Activated B cell treated with CpG ODN at 0.5 μM for 24 hours (primary cell): ENCODE measurements at regions of chr1 and their contacts with region 1.

Region 1: GRCh38 chr1:23019094-23019862 is at the start of gene KDM1A:
- DNase-seq: peak; percentile 96
- ATAC-seq: peak; percentile 98
- H3K4me3 Mint-ChIP-seq: peak within 1 kb of the TSS; percentile 93
- H3K27ac Mint-ChIP-seq: peak within 1 kb of the TSS; percentile 84
- H3K4me1 Mint-ChIP-seq: peaks cover 38% of the 10 kb centered on the region
- H3K27me3 Mint-ChIP-seq: no peaks in the 10 kb centered on the region
- CTCF ChIP-seq: no peak
- total RNA-seq, gene KDM1A: 40.7 and 41.5 TPM in 2 replicates

Region 2: GRCh38 chr1:22431965-22432364 is 587.3 kb before region 1 on chr1:
- CTCF ChIA-PET with region 1: no interaction called
- POLR2A ChIA-PET with region 1: no interaction called
- intact Hi-C with region 1: no loop called
- DNase-seq: no peak
- ATAC-seq: no peak
- H3K4me3 Mint-ChIP-seq: no peak overlapping the region
- H3K27ac Mint-ChIP-seq: no peak overlapping the region
- H3K4me1 Mint-ChIP-seq: peaks cover 6% of the 10 kb centered on the region
- H3K27me3 Mint-ChIP-seq: peaks cover 3% of the 10 kb centered on the region
- CTCF ChIP-seq: no peak

Region 3: GRCh38 chr1:23035823-23036452 is 16.7 kb after region 1 on chr1:
- CTCF ChIA-PET with region 1: no interaction called
- POLR2A ChIA-PET with region 1: interaction called, 15 read pairs
- intact Hi-C with region 1: no loop called
- DNase-seq: no peak
- ATAC-seq: no peak
- H3K4me3 Mint-ChIP-seq: no peak overlapping the region
- H3K27ac Mint-ChIP-seq: no peak overlapping the region
- H3K4me1 Mint-ChIP-seq: peaks cover 24% of the 10 kb centered on the region
- H3K27me3 Mint-ChIP-seq: no peaks in the 10 kb centered on the region
- CTCF ChIP-seq: no peak

Region 4: GRCh38 chr1:23168457-23169194 is 149.3 kb after region 1 on chr1 and contains the start of gene LUZP1:
- CTCF ChIA-PET with region 1: no interaction called
- POLR2A ChIA-PET with region 1: interaction called, 5 read pairs
- intact Hi-C with region 1: loop called (anchors 2 kb)
- DNase-seq: peak; percentile 80
- ATAC-seq: peak; percentile 84
- H3K4me3 Mint-ChIP-seq: peak within 1 kb of the TSS; percentile 95
- H3K27ac Mint-ChIP-seq: peak within 1 kb of the TSS; percentile 80
- H3K4me1 Mint-ChIP-seq: peaks cover 23% of the 10 kb centered on the region
- H3K27me3 Mint-ChIP-seq: no peaks in the 10 kb centered on the region
- CTCF ChIP-seq: no peak
- total RNA-seq, gene LUZP1: 10.8 and 13.0 TPM in 2 replicates